IMR-90 (cell line): ENCODE measurements at regions of chr16 and their contacts with region 1.

Region 1: DNA sequence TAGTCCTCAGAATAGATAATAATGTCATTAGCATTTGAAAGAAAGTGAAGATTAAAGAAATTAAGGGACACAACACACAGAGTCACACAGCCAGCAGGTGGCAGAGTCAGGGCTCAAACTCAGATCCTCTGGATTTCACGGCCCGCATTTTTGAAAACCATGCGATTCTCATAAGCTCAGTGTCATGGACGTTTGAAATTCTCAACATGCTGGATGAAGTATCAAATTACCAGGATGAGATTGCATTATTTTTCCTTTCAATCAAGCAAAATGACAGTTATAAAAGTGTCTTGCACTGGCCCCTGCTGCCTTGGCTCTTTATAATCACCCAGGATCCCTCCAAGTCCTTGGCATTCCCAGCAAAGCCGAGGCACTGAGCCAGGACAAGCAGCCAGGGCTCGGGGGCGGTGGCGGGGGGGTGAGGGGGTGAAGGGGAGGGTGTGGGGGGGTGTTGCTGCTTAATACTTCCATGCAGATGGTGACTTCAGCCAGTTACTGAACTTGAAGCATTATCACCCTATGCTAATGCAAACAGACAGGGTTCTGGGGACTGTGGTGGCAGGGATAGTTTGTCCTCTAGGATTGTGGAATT is 6.6 kb upstream of the BMERB1 start:
- DNase-seq: peak; percentile 84
- ATAC-seq: peak; percentile 94
- H3K4me3 ChIP-seq: no peak overlapping the region
- H3K27ac ChIP-seq: no peak overlapping the region
- H3K4me1 ChIP-seq: no peaks in the 10 kb centered on the region
- H3K27me3 ChIP-seq: no peaks in the 10 kb centered on the region; the same call in 1 of the 2 replicates
- CTCF ChIP-seq: peak; percentile 76
- POLR2A ChIP-seq: no peak
- RAD21 ChIP-seq: peak; percentile 73

Region 2: DNA sequence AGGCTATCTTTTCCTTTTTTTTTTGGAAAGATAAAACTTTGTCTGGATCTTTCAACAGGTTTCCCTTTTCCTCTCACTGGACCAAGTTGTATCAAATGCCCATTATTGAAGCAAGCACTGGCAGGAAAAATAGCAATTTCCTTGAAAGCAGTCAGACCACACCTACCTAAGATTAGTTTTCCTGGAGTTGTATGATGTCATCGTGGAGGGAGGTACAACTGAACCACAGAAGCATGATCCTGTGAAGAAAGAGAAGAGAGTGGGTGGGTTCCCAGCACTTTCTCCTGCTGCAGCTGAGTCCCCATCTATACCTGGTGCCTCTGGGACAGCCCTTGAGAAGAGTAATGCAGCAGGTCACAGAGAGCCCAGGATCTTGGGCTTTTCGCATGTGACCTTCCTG is 1571.3 kb before region 1 on chr16:
- CTCF ChIA-PET with region 1: no interaction called
- POLR2A ChIA-PET with region 1: no interaction called
- dilution Hi-C with region 1: no loop called
- in situ Hi-C with region 1: no loop called
- intact Hi-C with region 1: no loop called
- DNase-seq: no peak
- ATAC-seq: no peak
- H3K4me3 ChIP-seq: no peak overlapping the region
- H3K27ac ChIP-seq: no peak overlapping the region
- H3K4me1 ChIP-seq: no peaks in the 10 kb centered on the region
- H3K27me3 ChIP-seq: no peaks in the 10 kb centered on the region
- CTCF ChIP-seq: no peak
- POLR2A ChIP-seq: no peak
- RAD21 ChIP-seq: no peak

Region 3: DNA sequence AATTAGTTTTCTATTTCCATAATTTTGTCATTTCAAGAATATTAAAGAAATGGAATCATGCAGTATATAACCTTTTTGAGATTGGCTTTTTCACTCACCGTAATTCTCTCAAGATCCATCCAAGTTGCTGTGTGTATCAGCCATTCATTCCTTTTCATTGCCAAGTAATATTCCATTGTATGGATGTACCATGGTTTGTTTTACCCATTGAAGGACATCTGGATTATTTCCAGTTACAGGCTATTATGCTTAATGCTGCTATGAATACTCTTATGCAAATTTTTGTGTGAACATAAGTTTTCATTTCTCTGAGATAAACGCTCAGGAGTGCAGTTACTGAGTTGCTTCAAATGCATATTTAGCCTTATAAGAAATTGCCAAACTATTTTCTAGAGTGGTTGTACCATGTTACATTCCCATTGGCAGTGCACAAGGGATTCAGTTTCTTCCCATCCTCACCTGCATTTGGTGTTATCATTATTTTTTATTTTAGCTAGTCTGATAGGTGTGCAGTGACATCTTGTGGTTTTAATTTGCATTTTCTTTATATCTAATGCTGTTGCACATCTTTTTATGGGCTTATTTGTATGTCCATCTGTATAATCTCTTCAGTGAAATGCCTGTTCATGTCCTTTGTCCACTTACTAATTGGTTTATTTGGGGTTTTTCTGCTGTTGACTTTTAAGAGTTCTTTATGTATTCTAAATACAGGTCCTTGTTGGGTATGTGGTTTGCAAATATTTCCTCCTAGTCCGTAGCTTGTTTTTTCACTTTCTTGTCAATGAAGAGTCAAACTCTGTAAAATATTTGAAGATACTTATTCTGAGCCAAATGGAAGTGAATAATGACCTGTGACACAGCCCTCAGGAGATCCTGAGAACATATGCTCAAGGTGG is 39.4 kb after region 1 on chr16:
- CTCF ChIA-PET with region 1: no interaction called
- POLR2A ChIA-PET with region 1: no interaction called
- dilution Hi-C with region 1: no loop called
- in situ Hi-C with region 1: no loop called
- intact Hi-C with region 1: no loop called
- DNase-seq: no peak
- ATAC-seq: no peak
- H3K4me3 ChIP-seq: no peak overlapping the region
- H3K27ac ChIP-seq: no peak overlapping the region
- H3K4me1 ChIP-seq: no peaks in the 10 kb centered on the region
- H3K27me3 ChIP-seq: no peaks in the 10 kb centered on the region
- CTCF ChIP-seq: peak; percentile 35; the same call in 1 of the 2 replicates
- POLR2A ChIP-seq: no peak
- RAD21 ChIP-seq: peak; percentile 55

Region 4: DNA sequence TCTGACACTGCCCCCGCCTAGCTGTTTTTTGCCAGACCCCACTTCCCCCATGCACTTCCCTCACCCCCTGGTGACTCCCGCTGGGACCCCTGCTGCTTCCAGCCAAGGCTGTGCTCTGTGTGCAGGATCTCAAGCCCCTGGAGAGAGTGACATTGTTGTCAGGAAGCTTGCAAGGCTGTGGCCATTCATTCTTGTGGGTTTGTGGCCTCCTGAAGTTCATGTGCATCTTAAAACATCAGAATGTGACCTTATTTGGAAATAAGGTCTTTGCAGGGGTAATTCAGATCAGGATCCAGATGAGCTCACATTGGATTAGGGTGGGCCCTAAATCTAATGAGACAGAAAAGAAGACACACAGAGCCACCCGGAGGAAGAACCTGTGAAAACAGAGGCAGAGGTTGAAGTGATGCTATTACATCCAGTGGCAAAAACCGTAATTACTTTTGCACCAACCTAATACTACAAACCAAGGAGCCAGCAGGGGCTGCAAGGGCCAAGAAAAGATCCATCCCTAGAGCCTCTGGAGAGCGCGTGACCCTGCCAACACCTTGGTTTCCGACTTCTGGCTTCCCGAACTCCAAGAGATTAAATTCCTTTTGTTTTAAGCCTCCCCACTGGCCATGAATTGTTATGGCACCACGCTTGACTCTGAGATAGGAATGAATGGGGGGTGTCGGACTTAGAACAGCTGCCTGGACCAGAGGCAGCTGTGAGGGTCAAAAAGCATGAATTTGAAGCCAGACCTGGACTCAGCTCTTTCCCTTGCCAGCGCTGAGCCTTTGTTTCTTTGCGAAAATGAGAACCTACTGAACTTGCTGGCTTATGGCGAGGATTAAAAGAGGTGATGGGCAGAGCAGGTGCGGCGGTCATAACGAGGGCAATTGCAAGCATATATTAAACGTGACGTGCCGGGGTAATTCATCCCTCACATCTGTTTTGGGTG is 82.1 kb after region 1 on chr16:
- CTCF ChIA-PET with region 1: interaction called, 4 read pairs
- POLR2A ChIA-PET with region 1: no interaction called
- dilution Hi-C with region 1: no loop called
- in situ Hi-C with region 1: loop called (anchors 10 kb)
- intact Hi-C with region 1: loop called (anchors 5 kb)
- DNase-seq: peak; percentile 60
- ATAC-seq: peak; percentile 53
- H3K4me3 ChIP-seq: no peak overlapping the region
- H3K27ac ChIP-seq: peak overlapping the region; percentile 32; the same call in 1 of the 2 replicates
- H3K4me1 ChIP-seq: peaks cover 12% of the 10 kb centered on the region
- H3K27me3 ChIP-seq: no peaks in the 10 kb centered on the region
- CTCF ChIP-seq: no peak; the same call in 1 of the 2 replicates
- POLR2A ChIP-seq: no peak
- RAD21 ChIP-seq: peak; percentile 45

Region 5: GRCh38 chr16:15548482-15548891 is 120.7 kb after region 1 on chr16:
- CTCF ChIA-PET with region 1: interaction called, 7 read pairs
- POLR2A ChIA-PET with region 1: no interaction called
- dilution Hi-C with region 1: no loop called
- in situ Hi-C with region 1: loop called (anchors 10 kb)
- intact Hi-C with region 1: loop called (anchors 2 kb)
- DNase-seq: peak; percentile 16
- ATAC-seq: 0 out of 2 replicates have a peak, but pooled peaks have one; percentile 30
- H3K4me3 ChIP-seq: no peak overlapping the region
- H3K27ac ChIP-seq: no peak overlapping the region
- H3K4me1 ChIP-seq: 0 out of 2 replicates have a peak, but pooled peaks cover 1% of the 10 kb centered on the region
- H3K27me3 ChIP-seq: no peaks in the 10 kb centered on the region
- CTCF ChIP-seq: no peak
- POLR2A ChIP-seq: no peak
- RAD21 ChIP-seq: no peak

Region 6: GRCh38 chr16:15553313-15554088 is 125.8 kb after region 1 on chr16:
- CTCF ChIA-PET with region 1: interaction called, 5 read pairs
- POLR2A ChIA-PET with region 1: no interaction called
- dilution Hi-C with region 1: no loop called
- in situ Hi-C with region 1: loop called (anchors 10 kb)
- intact Hi-C with region 1: loop called (anchors 2 kb)
- DNase-seq: peak; percentile 28
- ATAC-seq: no peak
- H3K4me3 ChIP-seq: no peak overlapping the region
- H3K27ac ChIP-seq: no peak overlapping the region
- H3K4me1 ChIP-seq: no peaks in the 10 kb centered on the region
- H3K27me3 ChIP-seq: no peaks in the 10 kb centered on the region
- CTCF ChIP-seq: no peak
- POLR2A ChIP-seq: no peak
- RAD21 ChIP-seq: no peak

Region 7: DNA sequence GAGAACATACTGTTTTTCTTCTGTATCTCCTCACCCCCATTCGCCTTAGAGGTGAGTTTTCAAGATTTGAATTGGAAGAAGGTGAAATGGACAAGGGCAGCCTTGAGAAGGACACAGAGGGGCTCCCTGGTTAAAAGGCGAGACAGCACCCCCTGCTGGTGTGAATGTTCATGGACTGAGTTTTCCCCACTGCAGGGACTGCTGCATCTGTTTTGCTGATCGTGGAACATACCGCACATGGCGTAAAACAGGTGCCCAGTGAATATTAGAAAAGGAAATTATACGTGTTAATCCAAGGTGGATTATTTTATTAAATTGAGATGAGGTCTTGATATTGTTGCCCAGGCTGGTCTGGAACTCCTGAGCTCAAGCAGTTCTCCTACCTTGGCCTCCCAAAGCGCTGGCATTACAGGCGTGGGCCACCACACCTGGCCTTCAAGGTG is 276.8 kb after region 1 on chr16:
- CTCF ChIA-PET with region 1: no interaction called
- POLR2A ChIA-PET with region 1: no interaction called
- dilution Hi-C with region 1: no loop called
- in situ Hi-C with region 1: no loop called
- intact Hi-C with region 1: loop called (anchors 10 kb)
- DNase-seq: peak; percentile 69
- ATAC-seq: peak; percentile 73
- H3K4me3 ChIP-seq: no peak overlapping the region
- H3K27ac ChIP-seq: no peak overlapping the region
- H3K4me1 ChIP-seq: peaks cover 8% of the 10 kb centered on the region
- H3K27me3 ChIP-seq: no peaks in the 10 kb centered on the region
- CTCF ChIP-seq: peak; percentile 78
- POLR2A ChIP-seq: no peak
- RAD21 ChIP-seq: peak; percentile 81

Region 8: DNA sequence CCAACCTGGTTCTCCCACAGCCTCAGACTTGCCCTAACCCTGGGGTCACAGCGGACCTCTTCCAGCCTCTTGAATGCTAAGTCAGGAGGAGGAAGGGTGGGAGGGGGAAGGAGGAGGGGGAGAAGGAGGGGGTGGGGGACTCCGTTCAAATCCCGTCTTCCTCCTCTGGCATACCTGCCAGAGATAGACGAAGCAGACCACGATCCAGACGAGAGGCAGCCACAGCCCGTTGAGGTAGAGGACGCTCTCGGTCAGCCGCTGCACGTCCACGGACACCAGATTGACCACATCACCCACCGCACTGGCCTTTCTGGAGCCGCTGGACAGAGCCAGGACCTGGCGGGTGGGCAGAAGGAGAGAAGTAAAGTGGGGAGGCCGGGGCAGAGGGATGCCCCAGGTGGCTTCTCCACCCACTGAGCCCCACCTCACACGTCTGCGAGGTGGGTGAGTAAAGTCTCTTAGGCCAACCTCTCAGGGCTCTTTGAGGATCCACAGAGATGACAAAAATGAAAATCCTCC is 770.2 kb after region 1 on chr16:
- CTCF ChIA-PET with region 1: no interaction called
- POLR2A ChIA-PET with region 1: no interaction called
- dilution Hi-C with region 1: no loop called
- in situ Hi-C with region 1: no loop called
- intact Hi-C with region 1: loop called (anchors 5 kb)
- DNase-seq: no peak
- ATAC-seq: no peak
- H3K4me3 ChIP-seq: no peak overlapping the region
- H3K27ac ChIP-seq: no peak overlapping the region
- H3K4me1 ChIP-seq: peaks cover 2% of the 10 kb centered on the region
- H3K27me3 ChIP-seq: peaks cover 5% of the 10 kb centered on the region; the same call in 1 of the 2 replicates
- CTCF ChIP-seq: no peak
- POLR2A ChIP-seq: no peak
- RAD21 ChIP-seq: no peak